ENCODE measurements at regions of chr12 and their contacts with region 1.

Region 1: DNA sequence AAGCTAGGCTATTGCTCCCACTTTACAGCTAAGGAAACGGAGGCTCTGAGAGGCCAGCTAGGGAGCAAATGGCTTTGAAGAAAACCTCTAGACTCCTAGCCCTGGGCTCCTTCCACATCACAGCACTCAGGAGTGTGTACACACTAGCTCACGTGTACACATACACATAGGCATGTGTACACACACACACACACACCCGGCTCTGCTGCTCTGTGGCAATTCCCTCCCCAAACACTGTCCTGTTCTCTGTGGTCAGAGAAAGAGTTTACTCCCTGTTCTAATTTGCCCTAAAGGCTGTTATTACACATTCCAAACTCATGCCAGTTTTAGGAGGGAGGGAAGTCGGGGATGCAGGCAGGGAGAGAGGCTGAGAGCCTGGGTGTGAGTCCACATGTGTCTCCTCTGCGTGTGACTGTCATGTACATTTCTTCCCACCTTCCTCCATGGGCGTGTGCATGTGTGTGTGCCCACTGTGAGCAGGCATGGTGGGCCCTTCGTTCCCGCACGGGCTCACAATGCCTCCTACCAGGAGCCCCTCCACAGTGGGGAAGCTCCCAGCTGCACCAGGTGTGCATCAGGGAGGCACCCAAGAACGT is 14.2 kb downstream of the TRPV4 start:
- DNase-seq: peak; percentile 93
- H3K4me3 Mint-ChIP-seq: no peak overlapping the region
- H3K27ac Mint-ChIP-seq: peak overlapping the region; percentile 76
- H3K4me1 Mint-ChIP-seq: peaks cover 45% of the 10 kb centered on the region
- H3K27me3 Mint-ChIP-seq: no peaks in the 10 kb centered on the region
- CTCF ChIP-seq: no peak

Region 2: GRCh38 chr12:109833307-109834189 is 14.5 kb after region 1 on chr12 and contains the start of gene TRPV4:
- CTCF ChIA-PET with region 1: interaction called, 5 read pairs
- POLR2A ChIA-PET with region 1: interaction called, 47 read pairs
- intact Hi-C with region 1: loop called (anchors 2 kb)
- DNase-seq: no peak
- H3K4me3 Mint-ChIP-seq: no peak within 1 kb of the TSS
- H3K27ac Mint-ChIP-seq: no peak within 1 kb of the TSS
- H3K4me1 Mint-ChIP-seq: peaks cover 17% of the 10 kb centered on the region
- H3K27me3 Mint-ChIP-seq: no peaks in the 10 kb centered on the region
- CTCF ChIP-seq: no peak
- total RNA-seq, gene TRPV4: 0.09 and 0.15 TPM in 2 replicates

Region 3: GRCh38 chr12:109839444-109839843 is 20.4 kb after region 1 on chr12:
- CTCF ChIA-PET with region 1: interaction called, 39 read pairs
- POLR2A ChIA-PET with region 1: interaction called, 47 read pairs
- intact Hi-C with region 1: loop called (anchors 2 kb)
- DNase-seq: no peak
- H3K4me3 Mint-ChIP-seq: no peak overlapping the region
- H3K27ac Mint-ChIP-seq: no peak overlapping the region
- H3K4me1 Mint-ChIP-seq: peaks cover 17% of the 10 kb centered on the region
- H3K27me3 Mint-ChIP-seq: no peaks in the 10 kb centered on the region
- CTCF ChIP-seq: no peak

Region 4: DNA sequence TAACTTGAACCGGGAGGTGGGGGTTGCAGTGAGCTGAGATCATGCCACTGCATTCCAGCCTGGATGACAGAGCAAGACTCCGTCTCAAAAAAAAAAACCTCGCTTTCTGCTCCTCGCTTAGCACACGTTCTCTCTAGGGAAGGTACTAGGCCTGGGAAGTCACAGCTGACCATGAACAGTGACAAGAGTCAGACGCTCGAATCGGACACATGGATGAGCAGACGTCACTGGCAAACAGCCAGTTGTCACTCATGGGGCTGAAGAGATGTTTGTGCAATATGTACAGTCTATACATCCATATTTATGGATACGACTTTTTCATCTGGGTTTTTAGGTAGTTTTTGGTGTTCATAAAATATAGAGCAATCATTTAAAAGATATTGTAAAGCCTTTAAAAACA is 100.5 kb after region 1 on chr12:
- CTCF ChIA-PET with region 1: no interaction called
- POLR2A ChIA-PET with region 1: no interaction called
- intact Hi-C with region 1: no loop called
- DNase-seq: no peak
- H3K4me3 Mint-ChIP-seq: no peak overlapping the region
- H3K27ac Mint-ChIP-seq: no peak overlapping the region
- H3K4me1 Mint-ChIP-seq: no peaks in the 10 kb centered on the region
- H3K27me3 Mint-ChIP-seq: no peaks in the 10 kb centered on the region
- CTCF ChIP-seq: no peak

Measured in MCF 10A (cell line).